Activated CD8-positive, alpha-beta T cell treated with anti-CD3 and anti-CD28 coated beads for 36 hours (primary cell): ENCODE measurements at regions of chr5 and their contacts with region 1.

Region 1: DNA sequence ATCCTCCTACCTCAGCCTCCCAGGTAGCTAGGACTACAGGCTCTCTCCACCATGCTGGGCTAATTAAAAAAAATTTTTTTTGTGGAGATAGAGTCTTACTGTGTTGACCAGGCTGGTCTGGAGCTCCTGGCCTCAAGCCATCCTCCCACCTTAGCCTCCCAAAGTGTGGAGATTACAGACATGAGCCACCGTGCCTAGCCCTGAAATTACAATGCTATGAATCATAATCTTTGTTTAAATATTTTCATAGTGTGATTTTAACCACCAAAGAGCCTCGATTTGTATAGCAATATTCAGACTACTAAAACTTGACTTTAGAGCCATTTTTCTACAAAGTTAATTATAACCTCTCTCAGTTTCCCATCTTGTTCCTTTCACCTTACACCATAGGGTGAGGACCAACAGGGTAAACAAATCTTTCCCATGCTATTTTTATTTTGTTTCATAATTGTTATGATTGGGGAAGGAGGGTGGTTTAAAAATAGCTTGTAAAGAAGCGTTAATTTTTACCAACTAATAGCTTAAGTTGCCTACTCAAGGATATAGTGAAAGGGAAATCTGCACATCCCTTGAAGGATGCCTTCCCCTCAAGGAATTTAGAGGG is 32.7 kb downstream of the UBE2D2 start:
- DNase-seq: no peak
- ATAC-seq: no peak
- H3K4me3 Mint-ChIP-seq: no peak overlapping the region
- H3K27ac Mint-ChIP-seq: peak overlapping the region; percentile 15
- H3K4me1 Mint-ChIP-seq: peaks cover 41% of the 10 kb centered on the region
- H3K27me3 Mint-ChIP-seq: no peaks in the 10 kb centered on the region
- CTCF ChIP-seq: no peak

Region 2: GRCh38 chr5:139287890-139288635 is 305.8 kb before region 1 on chr5:
- CTCF ChIA-PET with region 1: no interaction called
- POLR2A ChIA-PET with region 1: no interaction called
- intact Hi-C with region 1: loop called (anchors 10 kb)
- DNase-seq: no peak
- ATAC-seq: peak; percentile 40
- H3K4me3 Mint-ChIP-seq: no peak overlapping the region
- H3K27ac Mint-ChIP-seq: peak overlapping the region; percentile 46
- H3K4me1 Mint-ChIP-seq: peaks cover 10% of the 10 kb centered on the region
- H3K27me3 Mint-ChIP-seq: no peaks in the 10 kb centered on the region
- CTCF ChIP-seq: no peak